Activated CD4-positive, alpha-beta T cell treated with anti-CD3 and anti-CD28 coated beads for 36 hours (primary cell): ENCODE measurements at regions of chr6 and their contacts with region 1.

Region 1: DNA sequence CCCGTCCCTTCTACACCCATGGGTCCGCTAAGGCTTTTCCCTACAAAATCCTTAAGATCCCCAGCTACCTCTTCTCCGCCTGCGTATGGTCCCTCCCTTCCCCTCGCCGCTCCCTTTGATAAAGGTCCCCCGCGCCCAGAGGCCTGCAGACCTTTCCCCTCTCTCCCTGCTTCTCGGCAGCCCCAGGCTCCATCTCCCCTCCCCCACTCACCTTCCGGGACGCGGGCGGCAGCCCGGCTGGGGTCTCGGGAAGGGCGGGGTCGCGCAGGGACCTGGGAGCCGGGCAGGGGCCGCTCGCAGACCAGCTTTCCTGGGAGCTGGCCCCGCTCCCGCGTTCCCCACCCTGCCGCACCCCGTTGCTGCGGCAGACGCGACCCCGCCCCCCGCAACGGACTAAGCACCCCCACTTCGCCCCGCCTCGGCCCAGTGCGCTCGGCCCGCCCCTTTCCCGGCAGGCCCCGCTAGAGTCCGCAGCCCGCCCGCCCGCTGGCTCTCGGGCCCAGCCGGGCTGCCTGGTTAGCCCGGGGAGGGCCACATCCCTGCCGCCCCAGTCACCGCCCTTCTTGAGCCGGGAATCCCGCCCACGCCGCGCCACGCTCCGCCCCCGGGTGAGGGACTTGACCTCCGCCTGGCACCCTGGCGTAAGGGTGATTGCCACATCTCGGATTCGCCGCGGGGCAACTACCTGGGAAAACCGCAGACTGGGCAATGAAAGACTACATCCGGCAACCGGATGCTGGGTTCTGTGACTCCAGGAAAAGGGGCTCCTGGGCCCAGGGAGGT is at the start of gene FLOT1:
- DNase-seq: peak; percentile 98
- ATAC-seq: peak; percentile 74
- H3K4me3 Mint-ChIP-seq: peak within 1 kb of the TSS; percentile 96
- H3K27ac Mint-ChIP-seq: peak within 1 kb of the TSS; percentile 95
- H3K4me1 Mint-ChIP-seq: peaks cover 67% of the 10 kb centered on the region
- H3K27me3 Mint-ChIP-seq: no peaks in the 10 kb centered on the region
- total RNA-seq, gene FLOT1: 155 to 188 TPM

Region 2: DNA sequence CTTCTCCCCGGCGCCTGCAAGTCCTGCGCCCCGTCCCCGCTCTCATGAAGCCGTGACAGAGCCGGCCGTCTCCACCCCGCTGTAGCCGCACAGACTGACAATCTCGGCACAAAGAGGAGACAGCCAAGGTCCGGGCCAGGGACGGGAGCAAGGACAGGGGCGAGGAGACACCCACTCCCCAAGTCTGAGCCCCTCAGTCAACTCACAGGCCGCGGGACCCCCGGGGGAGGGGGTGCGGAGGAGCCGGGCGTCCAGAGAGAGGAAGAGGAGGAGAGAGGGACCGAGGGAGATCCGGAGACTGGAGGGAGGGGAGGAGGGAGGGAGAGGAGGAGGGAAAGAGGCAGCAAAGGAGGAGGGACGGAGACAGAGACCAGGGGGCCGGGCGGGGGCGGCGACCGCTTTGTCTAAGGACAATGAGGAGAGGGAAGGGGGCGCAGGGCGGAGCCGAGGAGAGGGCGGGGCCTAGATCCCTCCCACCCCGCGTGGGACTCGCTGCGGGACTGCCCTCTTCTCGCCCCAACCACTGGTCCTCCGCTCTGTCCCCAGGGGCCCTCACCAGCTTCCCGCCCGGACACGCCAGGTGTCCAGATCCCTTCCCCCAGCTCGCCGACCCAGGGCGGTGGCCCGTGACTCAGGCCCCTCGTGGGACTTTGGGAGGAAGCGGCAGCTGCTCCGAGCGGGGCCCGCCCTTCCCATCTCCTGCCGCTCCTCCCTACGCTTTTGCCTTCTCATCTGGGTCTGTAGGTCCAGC is 55.4 kb before region 1 on chr6:
- CTCF ChIA-PET with region 1: no interaction called
- POLR2A ChIA-PET with region 1: no interaction called
- intact Hi-C with region 1: loop called in 1 of 2 experiments (anchors 1 kb)
- DNase-seq: peak; percentile 90
- ATAC-seq: peak; percentile 20
- H3K4me3 Mint-ChIP-seq: peak overlapping the region; percentile 100
- H3K27ac Mint-ChIP-seq: peak overlapping the region; percentile 89
- H3K4me1 Mint-ChIP-seq: peaks cover 42% of the 10 kb centered on the region
- H3K27me3 Mint-ChIP-seq: no peaks in the 10 kb centered on the region

Region 3: GRCh38 chr6:30787954-30788353 is 45.4 kb after region 1 on chr6:
- CTCF ChIA-PET with region 1: interaction called, 3 read pairs
- POLR2A ChIA-PET with region 1: interaction called, 6 read pairs
- intact Hi-C with region 1: loop called (anchors 1 kb)
- DNase-seq: peak; percentile 75
- ATAC-seq: peak; percentile 73
- H3K4me3 Mint-ChIP-seq: peak overlapping the region; percentile 59
- H3K27ac Mint-ChIP-seq: peak overlapping the region; percentile 96
- H3K4me1 Mint-ChIP-seq: peaks cover 67% of the 10 kb centered on the region
- H3K27me3 Mint-ChIP-seq: no peaks in the 10 kb centered on the region

Region 4: GRCh38 chr6:30877419-30878371 is 135.2 kb after region 1 on chr6:
- CTCF ChIA-PET with region 1: interaction called, 3 read pairs
- POLR2A ChIA-PET with region 1: no interaction called
- intact Hi-C with region 1: loop called (anchors 2 kb)
- DNase-seq: peak; percentile 86
- ATAC-seq: peak; percentile 84
- H3K4me3 Mint-ChIP-seq: peak overlapping the region; percentile 64
- H3K27ac Mint-ChIP-seq: peak overlapping the region; percentile 85
- H3K4me1 Mint-ChIP-seq: peaks cover 24% of the 10 kb centered on the region
- H3K27me3 Mint-ChIP-seq: no peaks in the 10 kb centered on the region